ENCODE measurements at regions of chr16 and their contacts with region 1.

Region 1: GRCh38 chr16:21646721-21647561 is 5.5 kb downstream of the IGSF6 start:
- DNase-seq: no peak

Region 2: GRCh38 chr16:21283521-21284289 is 363.2 kb before region 1 on chr16:
- in situ Hi-C with region 1: no loop called
- DNase-seq: peak; percentile 83

Region 3: GRCh38 chr16:21611546-21612384 is 35.2 kb before region 1 on chr16:
- in situ Hi-C with region 1: no loop called
- DNase-seq: peak; percentile 38

Region 4: DNA sequence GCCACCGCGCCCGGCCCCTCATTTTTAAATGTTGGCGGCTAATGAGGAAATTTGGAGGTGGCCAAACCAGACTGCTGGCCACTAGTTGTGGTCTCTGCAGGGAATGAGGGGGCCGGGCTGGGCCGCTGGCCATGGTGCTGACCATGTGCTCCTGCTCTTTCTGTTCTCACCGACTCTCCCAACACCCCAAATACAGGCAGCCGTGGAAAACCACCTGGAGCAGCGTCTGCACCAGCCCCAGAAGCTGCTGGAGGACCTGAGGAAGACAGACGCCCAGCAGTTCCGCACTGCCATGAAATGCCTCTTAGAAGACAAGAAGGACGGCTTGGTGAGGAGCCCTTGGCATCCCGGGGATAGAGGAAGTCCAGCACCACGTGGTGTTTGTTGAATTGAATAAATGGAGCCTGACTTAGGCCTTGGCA is 38.1 kb after region 1 on chr16:
- in situ Hi-C with region 1: loop called (anchors 5 kb)
- DNase-seq: no peak

Measured in G401 (cell line).